Ovary (tissue), 10 donors: ENCODE measurements at regions of chr16 and their contacts with region 1.

Region 1: DNA sequence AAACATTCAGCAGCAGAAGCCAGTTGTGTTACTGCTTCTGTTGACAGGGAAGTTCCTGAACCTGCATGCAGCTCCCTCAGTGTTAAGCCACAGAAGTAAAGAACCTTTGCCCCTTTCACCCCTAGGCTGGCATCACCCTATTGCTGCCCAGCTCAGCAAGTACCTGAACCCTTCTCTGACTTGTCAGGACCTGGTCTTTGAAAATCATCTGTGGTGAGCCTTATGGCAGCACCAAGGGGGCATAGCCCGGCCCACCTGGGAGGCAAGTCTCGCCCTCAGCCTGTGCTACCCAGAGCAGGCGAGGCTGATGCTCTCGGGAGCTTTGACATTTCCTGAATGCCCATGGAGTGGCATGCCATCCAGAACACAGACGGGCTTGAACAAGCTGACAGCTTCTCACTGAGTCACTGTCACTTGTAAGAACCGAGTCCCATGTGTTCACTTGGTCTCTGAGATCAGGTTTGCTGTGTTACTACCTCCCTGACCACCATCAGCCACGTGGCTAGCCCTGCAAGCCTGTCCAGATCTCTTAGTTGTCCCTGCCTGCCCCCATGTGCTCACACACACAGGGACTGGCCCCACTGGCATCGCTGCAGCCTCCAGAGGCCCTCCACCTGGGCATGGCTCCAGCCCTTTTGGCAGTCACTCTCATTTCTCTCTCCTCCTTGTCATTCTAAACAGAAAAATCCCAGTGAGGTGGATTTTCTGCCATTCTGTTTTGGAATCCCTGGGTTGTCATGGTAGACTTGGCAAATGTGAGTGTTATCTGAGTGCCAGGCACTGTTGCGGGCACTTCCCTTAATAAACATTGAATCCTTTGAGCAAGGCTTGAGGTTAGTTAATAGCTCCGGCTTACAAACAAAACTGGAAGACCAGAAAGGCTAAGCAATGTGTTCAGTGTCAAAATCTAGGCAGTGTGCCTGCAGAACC is 2.9 kb upstream of the CARMIL2 start:
- DNase-seq: peak in 1 of 5 donors; percentile 43
- H3K4me3 ChIP-seq: no peak overlapping the region
- H3K27ac ChIP-seq: no peak overlapping the region
- H3K4me1 ChIP-seq: no peaks in the 10 kb centered on the region
- H3K27me3 ChIP-seq: no peaks in the 10 kb centered on the region
- CTCF ChIP-seq: no peak
- EP300 ChIP-seq: no peak
- POLR2A ChIP-seq: no peak

Region 2: GRCh38 chr16:67447508-67448076 is 194.5 kb before region 1 on chr16:
- intact Hi-C with region 1: no loop called
- DNase-seq: peak; percentile 71 to 82 (median 77)
- H3K4me3 ChIP-seq: no peak overlapping the region
- H3K27ac ChIP-seq: peak overlapping the region; percentile 48 to 66
- H3K4me1 ChIP-seq: peaks cover 71% of the 10 kb centered on the region
- H3K27me3 ChIP-seq: no peaks in the 10 kb centered on the region
- CTCF ChIP-seq: peak in 1 of 3 donors; percentile 29
- EP300 ChIP-seq: no peak
- POLR2A ChIP-seq: no peak

Region 3: GRCh38 chr16:67546761-67547422 is 95.2 kb before region 1 on chr16:
- intact Hi-C with region 1: loop called in 3 of 4 experiments (anchors 5 to 10 kb)
- DNase-seq: peak; percentile 61 to 86 (median 78)
- H3K4me3 ChIP-seq: no peak overlapping the region
- H3K27ac ChIP-seq: no peak overlapping the region
- H3K4me1 ChIP-seq: no peaks in the 10 kb centered on the region
- H3K27me3 ChIP-seq: no peaks in the 10 kb centered on the region
- CTCF ChIP-seq: peak; percentile 74 to 91 (median 85)
- EP300 ChIP-seq: no peak
- POLR2A ChIP-seq: no peak